OCI-LY7 (cell line): ENCODE measurements at regions of chr3 and their contacts with region 1.

Region 1: GRCh38 chr3:187763850-187764648 is 18.8 kb upstream of the BCL6 start:
- DNase-seq: no peak
- H3K4me3 ChIP-seq: no peak overlapping the region
- H3K27ac ChIP-seq: no peak overlapping the region
- H3K4me1 ChIP-seq: no peaks in the 10 kb centered on the region
- CTCF ChIP-seq: no peak

Region 2: DNA sequence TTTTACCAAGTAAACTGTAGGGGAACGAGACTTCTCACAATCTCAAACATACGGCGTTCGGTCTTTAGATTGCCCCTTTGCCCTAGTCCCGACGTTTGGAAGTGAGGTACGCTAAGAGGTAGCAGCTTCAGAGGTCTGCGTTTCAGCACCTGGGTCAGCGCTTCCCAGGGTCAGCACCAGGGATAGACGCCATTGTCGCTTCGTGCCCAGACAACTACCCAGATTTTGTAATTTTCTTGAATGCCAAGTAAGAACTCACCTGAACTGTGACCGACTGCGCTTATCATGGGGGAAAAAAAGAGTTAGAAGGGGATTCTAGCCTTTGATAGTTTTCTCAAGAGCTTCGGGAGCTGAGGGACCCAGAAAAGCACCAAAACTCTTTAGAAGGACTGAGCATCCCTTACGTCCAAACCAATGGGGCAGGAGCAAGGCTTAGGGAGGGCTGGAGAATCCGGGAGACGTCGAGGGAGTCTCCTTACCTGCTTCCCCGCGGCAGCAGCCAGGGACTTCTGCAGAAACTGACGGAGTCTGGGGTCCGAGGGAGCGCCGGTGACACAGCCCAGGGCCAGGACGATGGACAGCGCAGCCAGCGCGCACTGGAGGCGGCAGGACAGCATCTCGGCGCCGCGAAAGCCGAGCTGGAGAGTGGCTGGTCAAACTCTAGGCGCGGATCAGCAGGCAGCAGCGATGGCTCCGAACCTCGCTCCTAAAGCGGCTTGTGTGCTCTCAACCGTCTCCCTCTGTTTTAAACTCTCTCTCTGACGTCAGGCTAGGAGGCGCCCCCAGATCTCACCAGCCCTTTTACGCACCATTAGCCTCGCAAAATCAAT is 94.2 kb before region 1 on chr3 and contains the start of gene SST:
- CTCF ChIA-PET with region 1: no interaction called
- POLR2A ChIA-PET with region 1: no interaction called
- intact Hi-C with region 1: no loop called
- DNase-seq: no peak
- H3K4me3 ChIP-seq: no peak within 1 kb of the TSS
- H3K27ac ChIP-seq: no peak within 1 kb of the TSS
- H3K4me1 ChIP-seq: no peaks in the 10 kb centered on the region
- CTCF ChIP-seq: no peak
- total RNA-seq, gene SST: not detected in 2 replicates

Region 3: GRCh38 chr3:187753516-187753915 is 10.5 kb before region 1 on chr3:
- CTCF ChIA-PET with region 1: no interaction called
- POLR2A ChIA-PET with region 1: interaction called, 10 read pairs
- intact Hi-C with region 1: no loop called
- DNase-seq: no peak
- H3K4me3 ChIP-seq: no peak overlapping the region
- H3K27ac ChIP-seq: no peak overlapping the region
- H3K4me1 ChIP-seq: peaks cover 38% of the 10 kb centered on the region
- CTCF ChIP-seq: no peak

Region 4: DNA sequence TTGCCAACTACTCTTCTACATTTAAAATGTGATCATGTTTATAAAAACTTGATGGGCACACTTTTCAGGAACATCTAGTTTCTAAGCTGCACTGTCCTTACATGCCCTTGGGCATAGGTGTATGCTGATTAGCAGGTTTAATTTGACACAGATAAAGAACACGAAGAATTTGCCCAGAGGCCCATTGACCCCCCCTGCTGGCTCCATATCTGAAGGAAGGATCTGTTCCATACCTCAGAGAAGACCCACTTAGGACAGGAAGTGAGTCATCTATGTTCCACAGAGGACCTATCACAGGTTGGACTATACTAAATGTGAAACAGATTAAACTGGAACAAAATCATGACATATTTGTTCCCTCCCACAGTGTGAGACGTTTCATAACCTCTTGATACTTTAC is 297.1 kb after region 1 on chr3:
- CTCF ChIA-PET with region 1: no interaction called
- POLR2A ChIA-PET with region 1: no interaction called
- intact Hi-C with region 1: no loop called
- DNase-seq: peak; percentile 75
- H3K4me3 ChIP-seq: no peak overlapping the region
- H3K27ac ChIP-seq: no peak overlapping the region
- H3K4me1 ChIP-seq: peaks cover 33% of the 10 kb centered on the region
- CTCF ChIP-seq: peak; percentile 72

Region 5: DNA sequence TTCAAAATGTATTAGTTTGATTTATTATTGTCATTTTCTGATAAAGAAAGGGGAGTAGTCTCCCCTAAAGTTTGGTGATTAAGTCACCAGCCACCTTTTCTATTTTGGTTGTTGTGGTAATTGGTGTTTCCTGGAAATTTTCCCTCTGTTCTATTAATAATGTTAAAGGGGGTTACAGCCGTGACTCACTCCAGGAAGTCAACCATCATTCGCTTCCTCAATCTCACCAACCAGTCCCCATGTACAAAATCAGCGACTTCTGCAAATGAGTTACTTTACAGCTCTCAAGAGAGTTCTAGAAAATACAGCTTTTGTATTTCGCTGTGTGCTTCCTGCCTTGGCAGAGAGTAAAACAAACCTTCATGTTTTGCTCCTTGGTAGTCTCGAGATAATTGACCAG is 675.0 kb after region 1 on chr3:
- CTCF ChIA-PET with region 1: no interaction called
- POLR2A ChIA-PET with region 1: no interaction called
- intact Hi-C with region 1: no loop called
- DNase-seq: peak; percentile 75
- H3K4me3 ChIP-seq: peak overlapping the region; percentile 11
- H3K27ac ChIP-seq: peak overlapping the region; percentile 51
- H3K4me1 ChIP-seq: peaks cover 46% of the 10 kb centered on the region
- CTCF ChIP-seq: no peak

Region 6: DNA sequence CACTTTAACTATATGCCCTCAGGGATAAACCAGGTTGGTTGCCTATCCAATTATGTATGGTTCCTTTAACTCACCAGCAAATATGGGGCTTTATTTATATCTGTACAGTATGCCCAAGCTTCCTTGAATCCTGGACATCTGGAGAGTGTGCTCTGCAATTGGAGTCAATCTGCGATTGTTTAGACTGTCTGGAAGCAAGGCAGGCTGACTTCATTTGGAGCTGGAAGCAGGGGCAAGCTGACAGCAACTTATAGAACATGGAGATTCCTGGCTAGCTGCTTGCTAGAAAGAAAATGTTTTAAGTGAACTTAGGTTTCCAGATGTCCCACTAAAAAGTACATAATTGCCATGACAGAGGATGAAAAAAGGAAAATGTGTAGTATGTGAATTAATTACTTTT is 1344.0 kb after region 1 on chr3:
- CTCF ChIA-PET with region 1: no interaction called
- POLR2A ChIA-PET with region 1: no interaction called
- intact Hi-C with region 1: no loop called
- DNase-seq: no peak
- H3K4me3 ChIP-seq: no peak overlapping the region
- H3K27ac ChIP-seq: no peak overlapping the region
- H3K4me1 ChIP-seq: no peaks in the 10 kb centered on the region
- CTCF ChIP-seq: no peak